ENCODE measurements at regions of chr1 and their contacts with region 1.

Region 1: DNA sequence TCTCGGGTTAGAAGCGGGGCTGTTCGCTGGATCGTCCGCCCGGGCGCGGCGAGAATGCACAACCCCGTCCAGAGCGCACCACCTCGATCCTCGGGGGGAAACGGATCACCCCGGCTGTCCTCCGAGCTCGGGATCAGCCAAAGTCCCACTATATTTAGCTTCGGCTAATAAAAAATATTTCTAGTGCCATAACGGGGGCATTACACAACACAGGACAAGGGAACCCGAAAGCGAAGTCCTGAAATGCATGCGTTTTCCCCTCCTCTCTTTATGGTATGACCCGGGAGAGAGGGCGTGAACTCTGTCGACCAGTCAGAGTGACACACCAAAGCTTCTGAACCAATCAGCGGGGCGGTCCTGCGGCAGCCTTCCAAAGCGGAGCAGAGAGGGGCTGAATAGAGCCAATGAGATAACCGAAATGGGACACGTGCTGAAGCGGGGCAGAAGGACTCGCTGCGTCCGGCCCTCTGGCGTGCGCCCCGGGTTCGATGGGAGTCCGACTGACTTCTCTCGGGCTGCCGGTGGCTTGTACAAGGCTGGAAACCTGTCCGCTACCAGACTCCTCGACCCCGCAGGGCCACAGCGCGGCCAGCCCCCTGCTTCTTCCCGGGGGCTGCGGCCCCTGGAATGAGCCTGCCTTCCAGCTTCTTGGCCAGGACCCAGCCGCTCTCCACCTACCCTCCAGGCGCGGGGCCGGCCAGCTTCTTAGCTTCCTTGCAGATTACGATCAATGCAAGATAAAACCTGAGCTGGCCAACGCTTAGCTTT is at the start of gene ALDH4A1:
- DNase-seq: peak; percentile 96
- ATAC-seq: peak; percentile 95
- H3K4me3 Mint-ChIP-seq: peak within 1 kb of the TSS; percentile 98
- H3K27ac Mint-ChIP-seq: peak within 1 kb of the TSS; percentile 99
- H3K4me1 Mint-ChIP-seq: peaks cover 17% of the 10 kb centered on the region
- H3K27me3 Mint-ChIP-seq: no peaks in the 10 kb centered on the region; the same call in none of the 2 replicates
- CTCF ChIP-seq: no peak
- total RNA-seq, gene ALDH4A1: 31.0 to 37.5 TPM (median 36.2 TPM) in 3 replicates

Region 2: GRCh38 chr1:18883636-18884418 is 18.9 kb before region 1 on chr1:
- CTCF ChIA-PET with region 1: interaction called, 41 read pairs
- POLR2A ChIA-PET with region 1: interaction called, 4 read pairs
- DNase-seq: peak; percentile 90
- ATAC-seq: peak; percentile 92
- H3K4me3 Mint-ChIP-seq: no peak overlapping the region
- H3K27ac Mint-ChIP-seq: no peak overlapping the region
- H3K4me1 Mint-ChIP-seq: no peaks in the 10 kb centered on the region; the same call in 1 of the 2 replicates
- H3K27me3 Mint-ChIP-seq: no peaks in the 10 kb centered on the region
- CTCF ChIP-seq: peak; percentile 85

Region 3: DNA sequence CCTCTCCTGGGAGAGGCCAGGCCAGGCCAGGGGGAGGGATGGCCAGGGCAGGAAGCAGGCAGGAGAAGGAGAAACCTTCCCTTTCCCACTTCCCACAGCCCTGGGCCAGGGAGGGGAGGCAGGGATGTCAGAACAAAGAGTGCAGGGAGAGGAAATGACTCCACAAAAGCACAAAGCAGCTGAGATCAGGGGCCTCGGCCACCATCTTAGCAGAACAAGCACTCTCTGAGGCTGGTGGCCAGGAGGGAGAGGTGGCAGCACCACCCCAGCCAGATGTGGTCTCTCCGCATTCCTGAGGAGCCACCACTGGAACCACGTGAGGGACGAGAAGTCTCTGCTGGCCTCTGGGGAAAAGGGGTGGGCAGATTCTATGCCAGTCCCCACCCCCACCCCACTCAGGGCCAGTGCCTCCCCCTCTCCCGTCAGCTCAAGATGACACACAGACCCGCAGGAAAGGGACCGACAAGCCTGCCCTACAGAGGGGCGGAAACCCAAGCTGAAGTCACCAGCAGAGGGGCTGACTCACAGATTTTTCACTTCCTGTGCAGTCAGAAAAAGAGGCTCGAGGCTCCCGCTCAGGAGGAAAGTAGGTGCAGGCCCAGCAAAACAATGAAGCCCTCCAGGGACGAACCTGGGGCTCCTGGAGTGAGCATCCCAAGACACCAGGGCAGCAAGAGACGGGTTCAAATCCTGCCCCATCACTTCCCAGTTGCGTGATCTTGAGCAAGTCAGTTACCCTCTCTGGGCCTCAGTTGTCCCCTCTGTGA is 23.8 kb after region 1 on chr1:
- CTCF ChIA-PET with region 1: interaction called, 19 read pairs
- POLR2A ChIA-PET with region 1: no interaction called
- DNase-seq: no peak
- ATAC-seq: no peak
- H3K4me3 Mint-ChIP-seq: no peak overlapping the region
- H3K27ac Mint-ChIP-seq: no peak overlapping the region
- H3K4me1 Mint-ChIP-seq: peaks cover 27% of the 10 kb centered on the region
- H3K27me3 Mint-ChIP-seq: no peaks in the 10 kb centered on the region
- CTCF ChIP-seq: no peak

Region 4: DNA sequence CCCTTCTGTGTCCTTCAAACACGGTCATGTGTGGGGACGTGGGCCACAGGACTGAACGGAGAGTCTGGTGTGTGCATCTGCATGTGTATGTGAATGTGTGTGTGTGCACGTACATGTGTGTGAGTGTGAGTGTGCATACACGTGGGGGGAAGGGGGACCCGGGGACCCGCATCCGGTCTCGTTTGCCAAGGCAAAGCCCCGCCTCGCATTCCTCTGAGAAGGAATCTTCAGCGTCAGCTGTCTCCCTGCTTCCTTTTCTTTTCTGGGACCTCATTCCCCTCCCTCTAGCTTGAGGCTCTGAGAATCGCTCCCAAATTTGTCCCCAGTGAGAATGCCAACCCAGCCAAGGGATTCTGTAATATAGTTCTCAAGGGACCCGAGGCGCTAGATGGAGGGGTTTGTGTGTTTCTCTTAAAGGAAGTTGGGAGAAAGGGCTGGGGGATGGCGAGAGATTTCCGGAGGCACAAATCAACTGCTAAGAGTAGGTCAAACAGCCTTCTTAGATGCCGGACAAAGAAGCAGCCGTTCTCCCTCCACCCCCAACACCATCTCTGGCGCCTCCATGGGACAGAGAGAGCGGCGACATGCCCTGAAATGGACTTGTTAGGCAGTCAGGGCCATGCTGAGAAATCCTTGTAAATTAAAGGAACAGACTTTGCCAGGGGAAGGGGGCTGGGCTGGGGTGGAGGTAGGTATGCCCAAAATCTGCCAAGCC is 47.1 kb after region 1 on chr1:
- CTCF ChIA-PET with region 1: interaction called, 29 read pairs
- POLR2A ChIA-PET with region 1: interaction called, 4 read pairs
- DNase-seq: peak; percentile 46
- ATAC-seq: peak; percentile 59
- H3K4me3 Mint-ChIP-seq: no peak overlapping the region
- H3K27ac Mint-ChIP-seq: peak overlapping the region; percentile 90
- H3K4me1 Mint-ChIP-seq: peaks cover 39% of the 10 kb centered on the region
- H3K27me3 Mint-ChIP-seq: peaks cover 11% of the 10 kb centered on the region
- CTCF ChIP-seq: no peak

Region 5: DNA sequence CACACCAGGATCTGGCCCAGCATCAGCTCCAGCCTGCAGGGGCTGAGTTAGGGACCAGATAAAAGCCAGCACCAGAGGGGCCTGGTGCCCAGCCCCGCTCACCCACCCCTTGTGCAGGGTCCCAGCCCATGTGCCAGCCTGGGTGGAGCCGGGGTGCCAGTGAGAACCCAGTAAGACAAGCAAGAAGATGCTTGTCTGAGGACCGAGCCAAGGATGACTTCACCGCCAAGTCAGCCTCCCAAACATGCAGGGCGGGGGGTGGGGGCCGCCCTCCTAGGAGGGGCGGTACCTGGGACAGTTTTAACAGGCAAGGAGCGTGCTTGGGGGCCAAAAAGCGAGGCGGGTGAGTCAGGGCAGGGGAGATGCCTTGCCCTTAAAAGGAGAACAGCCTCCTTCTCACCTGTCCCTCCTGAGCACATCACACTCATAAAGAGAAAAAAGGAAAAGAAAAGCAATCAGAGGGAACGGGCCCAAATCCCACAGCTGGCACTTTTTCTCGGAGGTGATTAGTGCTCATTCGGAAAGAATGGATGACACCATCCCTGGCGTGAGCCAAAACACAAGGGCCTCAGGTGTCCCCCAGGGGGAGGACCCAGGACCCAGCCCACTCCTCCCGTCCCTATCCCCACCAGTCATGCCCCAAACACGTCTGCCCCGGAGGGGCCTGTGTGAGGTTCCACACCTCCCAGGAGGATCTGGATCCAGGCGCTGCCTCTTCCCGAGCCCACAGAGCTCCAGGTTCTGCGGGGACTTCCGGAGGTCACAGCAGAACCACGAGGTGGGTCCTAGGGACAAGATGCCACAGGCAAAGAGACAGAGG is 131.4 kb after region 1 on chr1:
- CTCF ChIA-PET with region 1: interaction called, 11 read pairs
- POLR2A ChIA-PET with region 1: no interaction called
- DNase-seq: peak; percentile 8
- ATAC-seq: no peak
- H3K4me3 Mint-ChIP-seq: no peak overlapping the region
- H3K27ac Mint-ChIP-seq: no peak overlapping the region
- H3K4me1 Mint-ChIP-seq: no peaks in the 10 kb centered on the region
- H3K27me3 Mint-ChIP-seq: no peaks in the 10 kb centered on the region
- CTCF ChIP-seq: no peak

Region 6: GRCh38 chr1:19067182-19067911 is 164.6 kb after region 1 on chr1:
- CTCF ChIA-PET with region 1: interaction called, 30 read pairs
- POLR2A ChIA-PET with region 1: no interaction called
- DNase-seq: no peak
- ATAC-seq: peak; percentile 46
- H3K4me3 Mint-ChIP-seq: no peak overlapping the region
- H3K27ac Mint-ChIP-seq: no peak overlapping the region
- H3K4me1 Mint-ChIP-seq: peaks cover 3% of the 10 kb centered on the region; the same call in 1 of the 2 replicates
- H3K27me3 Mint-ChIP-seq: no peaks in the 10 kb centered on the region; the same call in 1 of the 2 replicates
- CTCF ChIP-seq: no peak